ENCODE measurements at regions of chr1 and their contacts with region 1.

Region 1: GRCh38 chr1:181166377-181167196 is 78.1 kb downstream of the IER5 start:
- DNase-seq: peak; percentile 80
- ATAC-seq: peak; percentile 99
- H3K4me3 ChIP-seq: no peak overlapping the region
- H3K27ac ChIP-seq: no peak overlapping the region
- H3K4me1 ChIP-seq: no peaks in the 10 kb centered on the region
- H3K27me3 ChIP-seq: no peaks in the 10 kb centered on the region
- CTCF ChIP-seq: peak; percentile 76

Region 2: DNA sequence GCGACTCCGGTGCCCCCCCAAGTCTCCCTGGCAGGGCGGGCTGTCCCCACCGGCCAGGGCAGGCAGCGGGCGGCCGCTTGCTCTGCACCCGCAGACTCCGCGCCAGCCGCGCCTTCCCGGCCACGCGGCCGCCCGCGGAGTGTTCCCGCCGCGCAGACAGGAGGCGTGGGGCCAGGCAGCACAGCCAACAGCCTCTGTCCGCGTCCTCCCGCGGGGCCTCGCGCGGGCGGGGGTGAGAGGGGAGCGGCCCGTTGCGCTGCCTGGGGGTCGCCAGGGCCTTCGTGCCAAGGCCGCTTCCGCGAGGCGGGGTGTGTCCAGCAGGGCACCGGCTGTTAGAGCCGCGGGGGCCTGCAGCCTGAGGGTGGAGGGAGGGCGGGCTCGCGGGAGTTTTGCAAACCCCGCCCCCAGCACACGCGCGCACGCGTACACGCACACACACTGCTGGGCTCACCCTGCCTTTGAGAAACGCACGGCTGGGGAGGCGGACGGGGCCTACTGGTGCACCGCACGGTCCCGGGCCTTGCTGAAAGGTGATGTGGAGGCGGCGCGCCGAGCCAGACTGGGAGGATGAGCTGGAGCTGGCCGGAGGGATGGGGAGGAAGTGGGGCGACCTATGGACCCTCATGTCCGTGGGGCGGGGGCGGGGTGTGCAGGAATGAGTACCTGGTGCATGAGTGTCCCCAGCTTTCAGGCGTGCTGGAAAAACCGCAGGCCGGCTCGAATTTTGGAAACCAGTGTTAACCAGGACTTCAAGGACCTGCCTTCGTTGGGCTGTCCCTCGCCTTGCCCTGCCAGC is 212.4 kb before region 1 on chr1:
- CTCF ChIA-PET with region 1: no interaction called
- POLR2A ChIA-PET with region 1: no interaction called
- intact Hi-C with region 1: loop called (anchors 10 kb)
- DNase-seq: peak; percentile 48
- ATAC-seq: peak; percentile 81
- H3K4me3 ChIP-seq: peak overlapping the region; percentile 63
- H3K27ac ChIP-seq: peak overlapping the region; percentile 30
- H3K4me1 ChIP-seq: peaks cover 14% of the 10 kb centered on the region
- H3K27me3 ChIP-seq: no peaks in the 10 kb centered on the region
- CTCF ChIP-seq: no peak

Region 3: GRCh38 chr1:181021811-181022434 is 144.7 kb before region 1 on chr1:
- CTCF ChIA-PET with region 1: no interaction called
- POLR2A ChIA-PET with region 1: interaction called, 11 read pairs
- intact Hi-C with region 1: no loop called
- DNase-seq: peak; percentile 83
- ATAC-seq: peak; percentile 58
- H3K4me3 ChIP-seq: peak overlapping the region; percentile 87
- H3K27ac ChIP-seq: peak overlapping the region; percentile 96
- H3K4me1 ChIP-seq: peaks cover 15% of the 10 kb centered on the region
- H3K27me3 ChIP-seq: no peaks in the 10 kb centered on the region
- CTCF ChIP-seq: no peak